Activated naive CD4-positive, alpha-beta T cell treated with anti-CD3 and anti-CD28 coated beads for 36 hours (primary cell): ENCODE measurements at regions of chr7 and their contacts with region 1.

Region 1: DNA sequence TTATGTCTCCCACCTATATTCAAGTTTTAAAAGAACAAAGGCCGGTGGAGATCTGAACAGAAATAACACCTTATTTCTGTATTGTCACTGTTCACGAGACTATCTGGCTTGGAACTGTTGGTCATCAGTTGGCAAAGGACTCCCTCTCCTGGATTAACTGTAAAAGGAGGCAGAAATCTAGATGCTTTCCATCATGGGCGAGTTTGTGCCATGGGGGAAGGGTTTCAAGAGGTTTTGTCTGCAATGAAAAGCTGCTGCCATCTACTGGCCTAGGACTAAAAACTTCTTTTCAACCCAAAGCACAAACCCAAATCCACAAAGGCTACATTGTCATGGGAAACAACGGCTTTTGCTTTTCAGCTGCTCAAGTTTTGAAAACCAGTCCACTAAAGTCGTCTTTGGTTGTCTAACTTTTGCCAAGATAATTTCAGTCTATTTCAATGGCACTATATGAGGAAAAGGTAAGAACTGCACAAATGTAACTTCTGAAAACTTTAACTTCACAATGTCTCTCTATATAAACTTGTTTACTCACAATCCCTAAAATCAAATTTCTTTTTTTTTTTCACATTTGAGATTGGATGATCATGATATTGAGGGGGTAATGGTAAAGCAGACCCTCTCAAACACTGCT is 196.8 kb downstream of the SKAP2 start:
- DNase-seq: peak; percentile 78
- H3K4me3 Mint-ChIP-seq: no peak overlapping the region
- H3K27ac Mint-ChIP-seq: no peak overlapping the region
- H3K4me1 Mint-ChIP-seq: peaks cover 19% of the 10 kb centered on the region
- H3K27me3 Mint-ChIP-seq: peaks cover 4% of the 10 kb centered on the region

Region 2: DNA sequence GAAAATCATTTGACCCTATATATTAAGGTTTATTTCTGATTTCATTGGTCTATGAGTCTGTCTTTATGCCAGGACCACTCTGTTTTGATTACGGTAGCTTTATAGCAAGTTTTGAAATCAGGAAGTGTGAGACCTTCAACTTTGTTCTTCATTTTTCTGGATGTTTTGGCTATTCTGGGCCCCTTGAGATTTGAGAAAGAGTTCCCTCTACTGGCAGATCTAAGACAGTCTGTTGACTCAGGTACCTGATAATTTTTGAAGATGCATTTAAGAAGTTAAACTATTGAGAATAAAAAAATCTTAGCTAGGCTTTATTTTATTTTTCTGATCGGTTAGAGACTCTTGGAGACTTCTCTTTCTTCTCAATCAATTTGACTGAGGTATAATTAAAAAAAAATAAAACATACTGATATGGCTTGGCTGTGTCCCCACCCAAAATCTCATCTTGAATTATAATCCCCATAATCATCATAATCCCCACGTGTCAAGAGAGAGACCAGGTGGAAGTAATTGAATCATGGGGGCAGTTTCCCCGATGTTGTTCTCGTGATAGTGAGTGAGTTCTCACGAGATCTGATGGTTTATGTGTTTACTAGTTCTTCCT is 166.8 kb before region 1 on chr7:
- CTCF ChIA-PET with region 1: interaction called, 6 read pairs
- intact Hi-C with region 1: loop called (anchors 1 kb)
- DNase-seq: no peak
- H3K4me3 Mint-ChIP-seq: no peak overlapping the region
- H3K27ac Mint-ChIP-seq: no peak overlapping the region
- H3K4me1 Mint-ChIP-seq: no peaks in the 10 kb centered on the region
- H3K27me3 Mint-ChIP-seq: peaks cover 3% of the 10 kb centered on the region

Region 3: GRCh38 chr7:26686448-26686981 is 18.9 kb after region 1 on chr7:
- CTCF ChIA-PET with region 1: interaction called, 13 read pairs
- intact Hi-C with region 1: no loop called
- DNase-seq: peak; percentile 7
- H3K4me3 Mint-ChIP-seq: no peak overlapping the region
- H3K27ac Mint-ChIP-seq: no peak overlapping the region
- H3K4me1 Mint-ChIP-seq: no peaks in the 10 kb centered on the region
- H3K27me3 Mint-ChIP-seq: peaks cover 20% of the 10 kb centered on the region

Region 4: DNA sequence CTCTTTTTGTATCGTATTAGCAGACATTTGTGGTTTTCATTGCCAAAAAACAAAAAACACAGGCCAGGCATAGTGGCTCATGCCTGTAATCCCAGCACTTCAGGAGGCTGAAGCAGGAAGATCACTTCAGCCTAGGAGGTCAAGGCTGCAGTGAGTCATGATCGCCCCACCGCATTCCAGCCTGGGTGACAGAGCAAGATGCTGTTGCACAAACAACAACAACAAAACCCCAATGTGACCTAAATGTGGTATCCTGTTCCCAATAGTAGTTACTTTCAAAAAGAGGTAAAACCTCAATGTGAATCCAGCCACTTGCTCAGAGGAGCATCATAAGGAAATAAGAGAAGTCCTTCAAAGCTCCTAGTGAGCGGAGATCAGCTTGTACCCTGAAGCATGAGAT is 242.6 kb after region 1 on chr7:
- CTCF ChIA-PET with region 1: no interaction called
- intact Hi-C with region 1: no loop called
- DNase-seq: no peak
- H3K4me3 Mint-ChIP-seq: no peak overlapping the region
- H3K27ac Mint-ChIP-seq: no peak overlapping the region
- H3K4me1 Mint-ChIP-seq: no peaks in the 10 kb centered on the region
- H3K27me3 Mint-ChIP-seq: no peaks in the 10 kb centered on the region